K562 (cell line): ENCODE measurements at regions of chr5 and their contacts with region 1.

Region 1: GRCh38 chr5:34587355-34588241 is 68.5 kb upstream of the RAI14 start:
- DNase-seq: peak; percentile 60 to 89 (median 74)
- ATAC-seq: peak; percentile 92
- H3K4me3 ChIP-seq: no peak overlapping the region
- H3K27ac ChIP-seq: peak overlapping the region; percentile 78
- H3K4me1 ChIP-seq: peaks cover 23 to 58% of the 10 kb centered on the region in 2 experiments
- H3K27me3 ChIP-seq: no peaks in the 10 kb centered on the region; a peak in 2 of 5 replicates
- CTCF ChIP-seq: no peak
- EP300 ChIP-seq: peak; percentile 91
- POLR2A ChIP-seq: no peak; the same call in 1 of the 2 replicates
- RAD21 ChIP-seq: peak; percentile 13 to 34; a peak in 2 of 4 replicates

Region 2: GRCh38 chr5:34062419-34062818 is 525.2 kb before region 1 on chr5:
- CTCF ChIA-PET with region 1: no interaction called
- POLR2A ChIA-PET with region 1: no interaction called
- in situ Hi-C with region 1: no loop called
- intact Hi-C with region 1: no loop called
- DNase-seq: no peak
- ATAC-seq: no peak
- H3K4me3 ChIP-seq: no peak overlapping the region
- H3K27ac ChIP-seq: no peak overlapping the region
- H3K4me1 ChIP-seq: no peaks in the 10 kb centered on the region
- H3K27me3 ChIP-seq: no peaks in the 10 kb centered on the region
- CTCF ChIP-seq: no peak
- EP300 ChIP-seq: no peak
- POLR2A ChIP-seq: no peak
- RAD21 ChIP-seq: no peak

Region 3: DNA sequence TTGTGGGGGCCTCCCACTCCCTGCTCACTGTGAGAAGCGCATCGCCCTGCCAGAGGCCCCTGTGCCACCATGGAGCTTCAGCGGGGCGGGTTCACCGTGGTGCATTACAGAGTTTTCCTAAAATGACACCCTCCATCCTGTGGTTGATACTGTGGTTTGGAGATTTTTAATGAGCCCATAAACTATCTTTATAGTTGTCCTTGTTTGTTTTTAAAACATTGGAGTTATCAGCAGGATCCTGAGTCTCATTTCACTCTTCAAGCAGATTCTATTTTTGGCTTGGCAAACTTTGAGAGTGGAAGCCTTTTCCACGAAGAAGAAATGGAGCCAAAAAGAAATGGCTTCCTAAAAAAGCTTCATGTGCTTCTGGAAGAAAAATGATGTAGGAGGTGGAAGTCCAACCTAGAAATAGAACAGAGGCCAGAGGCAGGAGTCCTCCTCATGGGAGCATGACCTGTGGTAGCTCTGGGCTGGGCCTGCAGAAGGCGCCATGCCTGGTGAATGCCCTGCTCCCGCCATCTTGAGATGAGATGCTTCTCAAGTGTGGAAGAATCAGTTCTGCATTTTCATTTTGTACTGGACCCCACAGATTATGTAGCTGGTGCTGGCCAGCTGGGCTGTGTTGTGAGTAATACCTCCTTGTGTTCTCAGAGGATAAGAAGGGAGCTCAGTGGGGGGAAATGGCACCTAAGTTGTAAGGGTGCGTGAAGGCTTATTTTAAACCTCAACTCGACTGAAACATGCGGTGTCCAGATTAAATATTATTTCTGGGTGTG is 10.5 kb before region 1 on chr5:
- CTCF ChIA-PET with region 1: no interaction called
- POLR2A ChIA-PET with region 1: interaction called, 11 read pairs
- in situ Hi-C with region 1: no loop called
- intact Hi-C with region 1: no loop called
- DNase-seq: peak in 2 of 4 experiments; percentile 27 to 33
- ATAC-seq: peak; percentile 82
- H3K4me3 ChIP-seq: no peak overlapping the region
- H3K27ac ChIP-seq: no peak overlapping the region
- H3K4me1 ChIP-seq: 0 out of 5 replicates have a peak, but pooled peaks cover 0 to 10% of the 10 kb centered on the region in 2 experiments
- H3K27me3 ChIP-seq: no peaks in the 10 kb centered on the region
- CTCF ChIP-seq: peak in 2 of 3 experiments; percentile 36; a peak in 2 of 6 replicates
- EP300 ChIP-seq: no peak
- POLR2A ChIP-seq: no peak
- RAD21 ChIP-seq: no peak

Region 4: DNA sequence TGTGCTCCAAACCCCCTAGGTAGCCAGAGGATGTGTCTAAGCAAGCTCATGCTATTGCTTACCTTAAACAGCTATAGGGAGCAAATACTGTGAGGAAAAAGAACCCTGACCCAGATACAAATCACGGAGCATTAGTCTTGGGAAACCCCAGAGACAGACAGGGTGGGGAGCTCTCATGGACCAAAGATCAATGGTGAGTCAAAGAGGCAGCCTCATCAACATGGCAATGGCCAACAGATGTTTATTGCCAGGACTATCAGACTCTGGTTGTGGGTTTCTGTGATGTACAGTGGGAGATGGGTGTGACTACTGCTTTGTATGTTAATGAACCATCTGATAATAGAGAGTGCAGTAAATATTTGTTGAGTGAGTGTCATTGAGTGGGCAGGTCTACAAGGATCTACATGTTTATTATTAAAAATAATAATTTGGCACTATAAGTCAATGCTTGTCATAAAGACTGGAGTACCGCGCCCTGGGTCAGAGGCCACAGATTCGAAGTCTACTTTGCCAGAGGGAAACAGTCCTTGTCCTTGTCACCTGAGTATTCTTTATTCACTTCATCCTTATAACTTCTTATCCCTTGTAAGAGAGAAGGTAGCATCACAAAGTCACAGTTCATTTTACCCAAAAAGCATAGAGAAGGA is 12.0 kb after region 1 on chr5:
- CTCF ChIA-PET with region 1: no interaction called
- POLR2A ChIA-PET with region 1: interaction called, 25 read pairs
- in situ Hi-C with region 1: no loop called
- intact Hi-C with region 1: no loop called
- DNase-seq: no peak
- ATAC-seq: no peak
- H3K4me3 ChIP-seq: no peak overlapping the region
- H3K27ac ChIP-seq: no peak overlapping the region
- H3K4me1 ChIP-seq: peaks cover 0 to 10% of the 10 kb centered on the region in 2 experiments; a peak in 3 of 5 replicates
- H3K27me3 ChIP-seq: peaks cover 0 to 5% of the 10 kb centered on the region in 2 experiments; a peak in 1 of 5 replicates
- CTCF ChIP-seq: no peak
- EP300 ChIP-seq: no peak
- POLR2A ChIP-seq: no peak
- RAD21 ChIP-seq: no peak

Region 5: DNA sequence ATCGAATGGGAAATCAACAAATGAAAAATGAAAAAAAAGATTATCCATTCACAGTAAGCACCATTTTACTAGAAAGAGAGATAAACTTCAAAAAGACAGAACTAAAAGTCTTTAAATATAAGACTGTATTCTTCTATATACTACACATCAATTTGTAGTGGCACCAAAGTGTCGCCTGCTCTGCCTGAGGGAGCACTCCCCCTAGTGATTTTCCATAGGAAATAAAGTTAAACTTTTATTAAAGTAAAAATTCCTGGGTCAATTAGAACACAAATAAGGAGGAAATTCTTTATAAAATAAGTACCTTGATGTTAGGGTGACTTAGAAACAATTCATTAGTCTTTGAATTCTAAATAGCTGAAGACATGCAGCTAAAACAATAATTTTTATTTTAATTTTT is 318.0 kb after region 1 on chr5:
- CTCF ChIA-PET with region 1: no interaction called
- POLR2A ChIA-PET with region 1: no interaction called
- in situ Hi-C with region 1: no loop called
- intact Hi-C with region 1: no loop called
- DNase-seq: peak in 2 of 4 experiments; percentile 34 to 41
- ATAC-seq: peak; percentile 56
- H3K4me3 ChIP-seq: no peak overlapping the region
- H3K27ac ChIP-seq: no peak overlapping the region
- H3K4me1 ChIP-seq: peaks cover 5 to 6% of the 10 kb centered on the region in 2 experiments; a peak in 4 of 5 replicates
- H3K27me3 ChIP-seq: no peaks in the 10 kb centered on the region
- CTCF ChIP-seq: peak; percentile 45 to 73 (median 50); a peak in 4 of 6 replicates
- EP300 ChIP-seq: no peak
- POLR2A ChIP-seq: no peak
- RAD21 ChIP-seq: peak; percentile 37 to 50; a peak in 3 of 4 replicates